ENCODE measurements at regions of chr3 and their contacts with region 1.

Region 1: DNA sequence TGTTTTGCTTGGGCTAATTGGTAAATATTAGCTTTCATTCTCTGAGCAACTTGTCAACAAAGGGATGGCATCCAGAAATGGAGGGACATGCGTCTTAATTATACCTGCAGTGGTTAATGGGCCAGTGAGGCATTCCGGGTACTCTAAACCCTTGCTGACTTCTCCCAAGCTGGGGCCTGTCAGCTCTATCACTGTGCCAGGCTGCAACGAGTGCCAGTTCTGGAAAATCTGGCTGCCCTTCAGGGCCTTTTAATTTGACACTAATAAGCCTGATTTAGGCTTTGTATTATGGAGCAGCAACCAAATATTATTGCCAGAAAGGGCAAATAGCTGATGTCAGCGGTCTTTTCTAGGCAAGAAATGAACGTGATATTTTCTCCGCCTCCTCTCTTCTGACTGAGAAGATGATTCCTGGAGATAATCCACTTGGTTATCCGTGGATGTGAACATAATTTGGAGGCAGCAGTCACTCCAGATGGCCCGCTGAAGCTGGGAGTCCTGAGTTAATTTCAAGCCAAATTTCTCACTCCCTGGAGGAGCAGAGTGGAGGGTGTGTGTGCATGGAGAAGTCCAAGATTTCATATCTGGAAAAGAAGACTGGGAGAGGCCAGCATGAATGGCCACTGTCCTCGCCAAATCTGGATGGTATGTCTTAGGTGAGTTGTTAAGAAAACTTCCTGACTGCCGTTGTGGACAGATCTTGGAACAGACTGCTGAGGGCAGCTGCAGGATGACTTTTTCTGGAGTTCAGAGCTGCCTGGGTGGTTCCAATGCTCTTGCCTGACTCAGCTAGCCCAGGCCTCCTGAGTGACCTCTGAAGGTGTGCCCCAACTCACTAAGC is 44.4 kb upstream of the PSMD6 start:
- DNase-seq: no peak

Region 2: DNA sequence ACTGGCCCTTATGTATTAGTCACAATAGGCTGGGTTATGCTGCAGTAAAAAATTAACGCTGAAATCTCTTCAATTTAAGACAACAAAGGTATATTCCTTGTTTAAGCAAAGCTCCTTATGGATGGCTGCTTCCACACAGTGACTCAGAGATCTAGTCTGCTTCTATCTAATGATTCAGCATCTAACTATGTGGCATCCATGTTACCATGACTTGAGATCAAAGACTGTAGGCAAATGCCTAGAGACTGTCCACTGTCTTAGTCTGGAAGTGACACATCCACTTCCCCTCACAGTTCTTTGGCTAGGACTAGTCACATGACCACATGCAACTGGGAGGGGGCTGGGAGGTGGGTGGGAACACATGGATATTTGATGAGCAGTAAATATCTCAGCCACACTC is 16.9 kb after region 1 on chr3:
- intact Hi-C with region 1: no loop called
- DNase-seq: no peak

Region 3: DNA sequence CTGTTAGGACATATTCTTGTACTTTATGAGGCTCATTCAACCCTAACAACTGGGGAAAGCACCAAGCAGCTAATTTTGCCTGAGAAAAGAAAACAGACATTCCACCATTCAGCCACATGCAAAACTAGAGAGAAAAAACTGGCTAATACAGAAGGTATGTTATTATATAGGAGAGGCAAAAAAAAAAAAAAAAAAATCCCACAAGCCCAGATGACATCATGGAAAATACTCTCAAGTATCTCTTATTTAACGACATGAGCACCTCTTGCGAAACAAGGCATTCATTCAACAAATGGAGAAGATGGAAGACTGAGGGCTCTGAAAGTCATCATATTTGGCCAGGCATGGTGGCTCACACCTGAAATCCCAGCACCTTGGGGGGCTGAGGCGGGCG is 96.0 kb after region 1 on chr3:
- intact Hi-C with region 1: loop called (anchors 5 kb)
- DNase-seq: no peak

Region 4: GRCh38 chr3:64321747-64322146 is 254.0 kb after region 1 on chr3:
- intact Hi-C with region 1: loop called (anchors 10 kb)
- DNase-seq: no peak